Left colon (tissue), 2 donors: ENCODE measurements at regions of chr15 and their contacts with region 1.

Region 1: DNA sequence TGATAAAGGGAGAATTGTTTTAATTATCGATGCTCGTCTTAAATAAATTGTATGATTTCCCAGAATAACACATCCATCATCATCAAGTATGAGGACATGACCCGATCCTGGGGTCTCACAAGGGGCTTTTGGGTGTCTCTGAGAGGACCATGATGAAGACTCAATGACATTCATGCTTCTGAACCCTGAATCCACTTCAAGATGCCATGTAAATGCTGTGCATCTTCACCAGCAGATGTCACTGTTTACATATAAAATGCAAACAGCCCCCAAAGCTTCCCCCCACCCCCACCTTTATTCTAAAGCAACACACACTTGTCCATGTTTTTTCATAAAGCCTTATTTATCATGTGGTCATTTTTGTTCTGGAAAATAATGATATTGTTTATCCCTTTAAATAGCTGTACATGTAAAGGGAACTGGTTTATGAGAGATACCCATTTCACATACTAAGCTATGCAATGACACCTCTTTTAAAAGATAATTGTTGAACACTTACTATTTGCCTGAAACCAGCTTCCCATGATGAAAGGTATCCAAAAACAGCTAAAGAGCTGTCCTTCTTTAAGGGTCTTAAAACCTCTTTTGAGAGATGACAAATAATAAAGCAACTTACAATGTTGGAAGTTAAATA is 69.7 kb upstream of the UBE3A start:
- DNase-seq: no peak
- ATAC-seq: no peak

Region 2: DNA sequence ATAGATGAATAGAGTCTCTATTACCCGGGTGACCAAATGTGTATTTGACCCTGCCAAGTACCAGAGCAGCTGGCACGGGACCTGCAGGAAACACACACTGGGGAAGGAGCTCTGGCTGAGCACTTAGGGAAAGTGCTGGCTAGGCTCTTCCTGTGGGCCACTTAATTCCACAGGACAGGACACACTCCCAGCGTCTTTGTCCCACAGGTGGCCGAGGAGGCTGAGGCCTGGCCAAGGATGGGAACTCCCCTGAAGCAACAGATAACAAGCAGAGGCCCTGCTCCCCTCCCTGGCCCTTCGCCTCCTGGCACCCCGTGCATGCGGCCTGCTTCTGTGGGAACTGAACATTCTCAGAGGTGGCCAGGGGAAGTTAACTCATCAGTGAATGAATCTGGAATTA is 173.9 kb after region 1 on chr15:
- intact Hi-C with region 1: no loop called
- DNase-seq: no peak
- ATAC-seq: no peak

Region 3: DNA sequence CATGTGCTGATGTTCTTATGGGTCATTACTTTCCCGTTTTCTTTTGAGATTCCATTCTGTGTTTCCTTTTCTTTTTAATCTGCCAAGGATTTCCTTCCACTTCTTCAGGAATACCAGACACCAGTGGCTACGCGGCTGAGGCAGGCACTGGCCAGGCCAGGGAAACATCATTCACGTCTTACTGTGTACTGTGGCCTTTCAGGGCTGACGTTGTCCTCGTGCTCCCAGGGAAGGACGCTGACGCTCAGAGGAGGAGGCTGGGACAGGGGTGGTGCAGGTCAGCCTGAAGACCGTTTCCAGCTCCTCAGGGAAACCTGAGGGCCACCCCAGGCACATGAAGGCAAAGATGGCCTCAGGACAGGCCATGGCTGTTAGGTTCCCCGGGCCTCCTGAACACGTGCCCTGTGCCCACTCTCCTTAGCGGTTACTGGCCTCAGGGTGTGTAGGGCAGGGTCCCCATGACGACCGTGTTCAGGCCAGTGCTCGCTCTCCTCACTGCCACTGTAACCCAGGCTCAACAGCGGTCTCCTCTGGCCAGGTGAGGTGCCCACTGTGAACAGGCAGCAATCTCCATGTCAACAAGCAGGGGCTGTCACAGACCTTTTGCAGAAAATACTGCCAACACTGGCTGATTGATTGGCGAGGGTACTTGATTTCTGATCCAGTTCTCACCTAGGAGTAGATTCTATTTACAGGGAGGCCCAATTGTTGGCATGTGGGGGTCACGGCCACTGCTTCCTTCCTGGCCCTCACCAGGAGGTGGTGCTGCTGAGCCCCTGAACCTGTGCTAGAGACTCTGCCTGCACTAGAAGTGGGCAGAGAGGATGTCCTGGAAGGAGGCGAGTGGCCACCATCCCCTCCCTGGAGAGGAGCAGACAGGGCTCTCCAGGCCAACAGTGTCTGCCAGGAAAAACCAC is 185.1 kb after region 1 on chr15:
- intact Hi-C with region 1: loop called in 1 of 2 experiments (anchors 10 kb)
- DNase-seq: peak in 1 of 2 donors; percentile 21
- ATAC-seq: no peak

Region 4: GRCh38 chr15:25759421-25759820 is 250.9 kb after region 1 on chr15:
- intact Hi-C with region 1: no loop called
- DNase-seq: no peak
- ATAC-seq: no peak

Region 5: DNA sequence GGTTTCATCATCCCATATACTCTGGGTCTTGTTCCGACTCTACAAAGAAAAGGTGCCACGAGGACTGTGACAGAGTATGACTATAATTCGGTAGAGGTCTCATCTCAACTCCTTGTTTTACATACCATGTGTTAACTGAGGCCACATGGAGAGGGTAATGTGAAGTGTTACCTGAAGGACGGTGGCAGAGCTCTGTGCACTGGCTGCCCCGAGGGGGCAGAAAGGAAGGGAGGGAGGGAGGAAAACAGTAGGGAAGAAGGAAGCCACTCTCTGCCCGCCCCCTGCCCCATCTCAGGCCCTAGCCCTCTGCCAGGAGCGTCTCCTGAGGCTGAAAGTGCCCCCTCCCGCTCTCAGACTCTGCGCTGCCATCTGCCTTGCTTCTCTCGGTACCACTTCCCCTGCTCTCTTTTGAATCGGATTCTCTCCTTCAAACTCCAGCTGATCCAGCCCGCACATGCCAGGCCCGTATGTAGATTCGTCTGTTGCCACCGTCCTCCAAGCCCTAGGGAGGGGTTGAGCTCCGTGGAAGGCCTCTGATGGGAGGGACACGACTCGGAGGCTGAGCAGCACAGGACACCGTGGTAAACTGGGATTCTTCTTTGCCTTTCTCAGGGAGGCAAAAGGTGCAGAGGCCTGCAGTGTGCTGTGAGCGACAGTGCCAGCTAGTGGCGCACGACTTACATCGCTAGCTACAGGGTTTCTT is 425.1 kb after region 1 on chr15:
- intact Hi-C with region 1: loop called in 1 of 2 experiments (anchors 10 kb)
- DNase-seq: peak; percentile 43 to 63
- ATAC-seq: peak; percentile 69